ENCODE measurements at regions of chr15 and their contacts with region 1.

Region 1: GRCh38 chr15:62389885-62390790 is 225.1 kb upstream of the C2CD4B start:
- DNase-seq: peak; percentile 91

Region 2: DNA sequence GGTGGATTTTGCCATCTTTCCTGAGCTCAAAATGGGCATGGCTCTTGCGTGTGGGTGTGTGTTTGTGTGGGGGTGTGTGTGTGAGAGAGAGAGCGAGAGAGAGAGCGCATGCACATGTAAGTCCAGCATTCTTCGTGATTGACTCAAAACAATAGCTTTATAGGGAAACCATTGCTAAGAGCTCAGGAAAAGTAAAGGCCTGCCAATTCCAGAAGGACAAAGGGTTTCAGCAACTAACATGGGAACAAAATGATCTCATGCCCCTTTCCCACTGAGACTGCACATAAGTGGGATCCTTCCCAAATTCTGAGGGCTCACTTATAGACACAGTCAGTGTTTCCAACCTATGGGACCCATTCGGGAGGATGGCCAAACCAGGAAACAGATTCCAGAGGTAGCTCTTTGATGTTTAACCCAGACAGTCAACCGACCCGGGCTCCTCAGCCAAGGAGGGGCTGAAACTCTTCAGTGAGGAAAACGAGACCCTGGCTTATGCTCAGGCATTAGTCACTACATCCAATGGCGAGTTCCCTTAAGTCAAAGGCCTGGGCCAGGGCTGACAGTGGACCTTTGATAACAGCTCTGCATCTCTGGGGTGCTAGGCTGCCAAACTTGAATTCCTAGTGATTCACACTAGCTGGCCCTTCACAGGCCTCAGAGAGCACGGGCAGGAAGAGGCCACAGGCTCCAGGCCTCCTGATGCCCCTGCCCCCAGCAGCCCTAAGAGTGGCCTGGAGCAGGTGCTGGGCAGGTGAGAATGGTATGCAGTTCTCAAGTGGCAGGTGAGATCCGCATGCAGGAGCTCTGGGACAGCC is 79.9 kb after region 1 on chr15:
- intact Hi-C with region 1: loop called in 1 of 2 experiments (anchors 10 kb)
- DNase-seq: peak; percentile 90

Region 3: GRCh38 chr15:62649793-62650420 is 259.8 kb after region 1 on chr15:
- intact Hi-C with region 1: loop called in 1 of 2 experiments (anchors 5 kb)
- DNase-seq: no peak

Measured in posterior vena cava (tissue), 2 donors.